Activated B cell treated with CpG ODN at 0.5 μM for 24 hours (primary cell): ENCODE measurements at regions of chr18 and their contacts with region 1.

Region 1: GRCh38 chr18:9082711-9083510 is 19.6 kb upstream of the NDUFV2 start:
- DNase-seq: no peak
- ATAC-seq: peak; percentile 83
- H3K4me3 Mint-ChIP-seq: peak overlapping the region; percentile 5
- H3K27ac Mint-ChIP-seq: peak overlapping the region; percentile 67
- H3K4me1 Mint-ChIP-seq: peaks cover 19% of the 10 kb centered on the region
- H3K27me3 Mint-ChIP-seq: no peaks in the 10 kb centered on the region
- CTCF ChIP-seq: no peak

Region 2: GRCh38 chr18:9095297-9096006 is 12.5 kb after region 1 on chr18:
- CTCF ChIA-PET with region 1: interaction called, 3 read pairs
- POLR2A ChIA-PET with region 1: interaction called, 10 read pairs
- intact Hi-C with region 1: no loop called
- DNase-seq: no peak
- ATAC-seq: peak; percentile 87
- H3K4me3 Mint-ChIP-seq: peak overlapping the region; percentile 74
- H3K27ac Mint-ChIP-seq: peak overlapping the region; percentile 92
- H3K4me1 Mint-ChIP-seq: peaks cover 21% of the 10 kb centered on the region
- H3K27me3 Mint-ChIP-seq: no peaks in the 10 kb centered on the region
- CTCF ChIP-seq: no peak

Region 3: GRCh38 chr18:9102508-9103375 is 19.8 kb after region 1 on chr18 and contains the start of gene NDUFV2:
- CTCF ChIA-PET with region 1: interaction called, 4 read pairs
- POLR2A ChIA-PET with region 1: interaction called, 19 read pairs
- intact Hi-C with region 1: no loop called
- DNase-seq: peak; percentile 99
- ATAC-seq: peak; percentile 96
- H3K4me3 Mint-ChIP-seq: peak within 1 kb of the TSS; percentile 94
- H3K27ac Mint-ChIP-seq: peak within 1 kb of the TSS; percentile 94
- H3K4me1 Mint-ChIP-seq: peaks cover 51% of the 10 kb centered on the region
- H3K27me3 Mint-ChIP-seq: no peaks in the 10 kb centered on the region
- CTCF ChIP-seq: no peak
- total RNA-seq, gene NDUFV2: 168 and 169 TPM in 2 replicates